ENCODE measurements at regions of chr1 and their contacts with region 1.

Region 1: GRCh38 chr1:160193091-160193819 is 2.9 kb downstream of the CASQ1 start:
- DNase-seq: peak; percentile 60
- H3K4me3 Mint-ChIP-seq: no peak overlapping the region
- H3K27ac Mint-ChIP-seq: no peak overlapping the region
- H3K4me1 Mint-ChIP-seq: no peaks in the 10 kb centered on the region
- H3K27me3 Mint-ChIP-seq: no peaks in the 10 kb centered on the region

Region 2: DNA sequence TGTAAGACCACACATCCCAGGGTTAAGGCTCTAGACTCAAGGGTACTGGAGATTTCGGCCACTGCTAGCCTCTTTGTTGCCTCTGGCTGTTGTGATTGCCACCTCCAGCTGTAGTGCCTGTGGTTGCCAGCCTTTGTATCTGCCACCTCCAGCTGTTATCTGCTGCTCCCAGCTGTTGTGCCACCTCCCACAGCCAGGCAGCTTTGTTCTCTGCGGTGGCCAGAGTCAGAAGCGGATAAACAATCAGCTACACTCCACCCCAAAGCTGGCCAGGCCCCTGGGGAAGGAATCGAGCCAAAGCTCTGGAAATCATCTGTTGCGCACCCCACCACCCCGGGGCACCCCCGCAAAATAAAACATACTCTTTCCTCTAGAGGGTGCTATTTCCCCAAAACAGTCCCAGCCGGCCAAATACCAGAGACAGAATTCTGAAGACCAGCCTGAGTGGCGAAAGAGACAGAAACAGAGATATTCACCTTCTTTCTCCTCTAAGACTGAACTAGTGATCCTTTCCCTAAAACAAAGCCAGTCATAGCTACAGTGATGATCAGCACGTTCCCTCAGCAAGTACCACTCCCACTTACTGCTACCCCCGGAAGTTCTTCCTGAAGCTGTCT is 146.7 kb before region 1 on chr1:
- intact Hi-C with region 1: no loop called
- DNase-seq: peak; percentile 26
- H3K4me3 Mint-ChIP-seq: peak overlapping the region; percentile 41
- H3K27ac Mint-ChIP-seq: peak overlapping the region; percentile 43
- H3K4me1 Mint-ChIP-seq: peaks cover 12% of the 10 kb centered on the region
- H3K27me3 Mint-ChIP-seq: peaks cover 17% of the 10 kb centered on the region

Region 3: GRCh38 chr1:160143695-160144094 is 49.6 kb before region 1 on chr1:
- intact Hi-C with region 1: no loop called
- DNase-seq: no peak
- H3K4me3 Mint-ChIP-seq: no peak overlapping the region
- H3K27ac Mint-ChIP-seq: no peak overlapping the region
- H3K4me1 Mint-ChIP-seq: no peaks in the 10 kb centered on the region
- H3K27me3 Mint-ChIP-seq: peaks cover 12% of the 10 kb centered on the region

Region 4: GRCh38 chr1:160291248-160292220 is 98.3 kb after region 1 on chr1:
- intact Hi-C with region 1: loop called (anchors 2 kb)
- DNase-seq: peak; percentile 58
- H3K4me3 Mint-ChIP-seq: no peak overlapping the region
- H3K27ac Mint-ChIP-seq: no peak overlapping the region
- H3K4me1 Mint-ChIP-seq: no peaks in the 10 kb centered on the region
- H3K27me3 Mint-ChIP-seq: no peaks in the 10 kb centered on the region

Region 5: GRCh38 chr1:160376525-160377131 is 183.4 kb after region 1 on chr1:
- intact Hi-C with region 1: loop called (anchors 1 kb)
- DNase-seq: no peak
- H3K4me3 Mint-ChIP-seq: no peak overlapping the region
- H3K27ac Mint-ChIP-seq: no peak overlapping the region
- H3K4me1 Mint-ChIP-seq: peaks cover 10% of the 10 kb centered on the region
- H3K27me3 Mint-ChIP-seq: no peaks in the 10 kb centered on the region

Measured in activated T-helper 2 cell treated with anti-CD3 and anti-CD28 coated beads, Interferon-gamma antibody, Interleukin-2, Interleukin-4, amounts not matched to agents 10 μg/mL and 5 μg/mL and 100 μg/mL, durations not matched to agents 14 hours and 24 hours and 36 hours (primary cell).